Prostate gland (tissue), 2 donors: ENCODE measurements at regions of chr17 and their contacts with region 1.

Region 1: DNA sequence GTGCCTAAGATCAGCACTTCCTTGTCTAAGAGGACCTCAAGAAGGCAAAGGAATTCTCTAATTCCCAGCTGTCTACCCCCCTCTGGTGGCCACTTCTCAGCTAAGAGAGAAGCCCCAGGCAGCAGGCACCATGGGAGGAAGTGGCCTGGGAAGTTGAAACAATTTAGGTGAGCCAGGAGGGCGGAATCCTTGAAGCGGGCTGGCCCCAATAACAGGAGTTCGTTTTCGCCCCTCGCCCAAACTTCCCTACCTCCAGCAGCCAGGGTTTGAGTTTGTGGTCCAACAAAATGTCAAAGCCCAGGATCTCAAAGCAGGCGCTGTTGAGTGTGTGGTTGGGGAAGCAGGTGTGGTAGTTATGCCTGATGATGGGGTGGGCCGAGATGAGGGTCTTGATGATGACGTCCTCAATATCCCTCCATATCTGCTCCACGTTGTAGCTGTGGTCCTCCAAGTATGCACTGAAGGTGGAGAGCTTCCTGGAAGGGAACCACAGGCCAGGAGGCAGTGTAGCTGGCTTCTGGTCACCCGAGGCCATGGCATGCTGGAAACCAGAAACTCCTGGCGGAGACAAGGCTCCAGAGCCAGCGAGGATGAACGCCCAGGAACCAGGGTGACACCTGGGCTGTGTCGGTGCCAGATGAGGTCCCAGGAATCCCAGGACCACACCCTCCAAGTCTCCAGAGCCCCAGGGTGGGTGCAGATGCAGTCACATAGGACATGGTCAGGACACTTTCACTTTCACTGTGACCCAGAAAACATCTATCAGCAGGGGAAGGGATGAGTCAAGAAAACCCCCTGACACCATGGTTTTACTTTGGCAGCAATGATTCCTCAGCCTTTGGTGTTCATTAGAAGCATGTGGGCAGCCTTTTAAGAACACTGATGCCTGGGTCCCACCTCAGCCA is 25.6 kb downstream of the TTLL6 start:
- DNase-seq: peak; percentile 95
- H3K4me3 ChIP-seq: no peak overlapping the region
- H3K27ac ChIP-seq: peak overlapping the region; percentile 46 to 53
- H3K4me1 ChIP-seq: no peaks in the 10 kb centered on the region
- H3K27me3 ChIP-seq: no peaks in the 10 kb centered on the region
- CTCF ChIP-seq: peak; percentile 70 to 94 (median 92)
- POLR2A ChIP-seq: no peak

Region 2: GRCh38 chr17:48671697-48672171 is 119.6 kb before region 1 on chr17:
- intact Hi-C with region 1: loop called (anchors 5 kb)
- DNase-seq: peak; percentile 81
- H3K4me3 ChIP-seq: peak overlapping the region; percentile 9 to 20
- H3K27ac ChIP-seq: no peak overlapping the region
- H3K4me1 ChIP-seq: no peaks in the 10 kb centered on the region
- H3K27me3 ChIP-seq: no peaks in the 10 kb centered on the region
- CTCF ChIP-seq: peak; percentile 64 to 87 (median 83)
- POLR2A ChIP-seq: no peak

Region 3: DNA sequence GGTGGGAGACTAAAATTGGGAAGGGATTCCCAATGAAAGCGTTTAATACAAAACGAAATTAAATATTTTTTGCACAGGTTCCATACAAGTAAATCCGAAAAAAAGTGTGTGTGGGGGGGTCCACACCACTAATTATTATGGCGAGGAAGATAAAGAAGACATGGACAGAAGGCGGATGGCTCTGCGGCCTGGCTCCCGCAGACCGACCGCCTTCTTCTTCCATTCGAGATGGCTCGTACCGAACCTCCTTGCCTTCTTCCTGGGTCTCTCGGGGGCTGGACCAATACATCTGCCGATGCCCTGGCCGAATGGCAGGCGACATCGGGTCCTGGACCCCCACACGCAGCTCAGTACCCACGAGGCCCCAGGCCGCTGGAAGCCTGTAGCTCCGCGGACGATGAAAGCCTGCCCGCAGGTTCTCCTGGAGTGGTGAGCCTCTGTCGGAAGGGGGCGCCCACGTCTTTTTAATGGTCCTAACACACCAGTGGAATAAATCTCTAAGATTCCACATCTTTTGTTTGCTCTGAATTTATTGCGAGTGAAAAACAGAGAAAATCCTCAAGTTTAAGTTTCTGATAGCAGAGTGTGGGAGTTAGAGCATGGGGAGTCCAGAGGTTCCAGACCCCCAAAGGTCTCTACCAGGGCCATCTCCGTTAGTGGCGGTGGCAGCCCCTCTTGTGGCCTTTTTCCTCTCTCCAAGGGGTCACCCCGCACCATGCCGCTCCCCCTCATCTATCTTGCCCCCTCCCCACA is 67.0 kb before region 1 on chr17:
- intact Hi-C with region 1: loop called (anchors 5 kb)
- DNase-seq: peak; percentile 94
- H3K4me3 ChIP-seq: peak overlapping the region; percentile 55 to 63
- H3K27ac ChIP-seq: peak overlapping the region; percentile 97 to 98
- H3K4me1 ChIP-seq: peaks cover 5% of the 10 kb centered on the region
- H3K27me3 ChIP-seq: no peaks in the 10 kb centered on the region
- CTCF ChIP-seq: peak; percentile 66 to 87 (median 80)
- POLR2A ChIP-seq: no peak

Region 4: DNA sequence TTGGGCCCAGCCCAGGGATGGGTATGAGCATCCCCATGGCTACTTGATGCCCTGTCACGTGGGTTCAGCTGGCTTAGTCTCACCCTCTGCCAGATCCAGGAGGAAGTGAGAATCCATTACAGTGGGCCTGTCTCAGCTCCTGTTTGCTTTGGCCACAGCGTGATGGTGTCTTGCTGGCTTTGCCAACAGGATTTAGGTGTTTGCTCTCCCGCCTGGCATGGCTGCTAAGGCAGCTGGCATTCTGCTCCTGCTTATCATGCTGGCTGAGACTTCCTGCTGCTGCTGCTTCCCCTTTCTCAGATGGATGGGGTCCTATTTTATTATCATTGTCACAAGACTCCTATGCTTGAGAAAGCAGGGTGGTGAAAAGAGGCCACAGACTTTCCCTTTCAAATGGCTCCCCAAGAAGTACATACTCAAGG is 34.5 kb before region 1 on chr17:
- intact Hi-C with region 1: no loop called
- DNase-seq: peak; percentile 91
- H3K4me3 ChIP-seq: no peak overlapping the region
- H3K27ac ChIP-seq: peak overlapping the region; percentile 61 to 73
- H3K4me1 ChIP-seq: peaks cover 29% of the 10 kb centered on the region
- H3K27me3 ChIP-seq: no peaks in the 10 kb centered on the region
- CTCF ChIP-seq: no peak
- POLR2A ChIP-seq: no peak

Region 5: DNA sequence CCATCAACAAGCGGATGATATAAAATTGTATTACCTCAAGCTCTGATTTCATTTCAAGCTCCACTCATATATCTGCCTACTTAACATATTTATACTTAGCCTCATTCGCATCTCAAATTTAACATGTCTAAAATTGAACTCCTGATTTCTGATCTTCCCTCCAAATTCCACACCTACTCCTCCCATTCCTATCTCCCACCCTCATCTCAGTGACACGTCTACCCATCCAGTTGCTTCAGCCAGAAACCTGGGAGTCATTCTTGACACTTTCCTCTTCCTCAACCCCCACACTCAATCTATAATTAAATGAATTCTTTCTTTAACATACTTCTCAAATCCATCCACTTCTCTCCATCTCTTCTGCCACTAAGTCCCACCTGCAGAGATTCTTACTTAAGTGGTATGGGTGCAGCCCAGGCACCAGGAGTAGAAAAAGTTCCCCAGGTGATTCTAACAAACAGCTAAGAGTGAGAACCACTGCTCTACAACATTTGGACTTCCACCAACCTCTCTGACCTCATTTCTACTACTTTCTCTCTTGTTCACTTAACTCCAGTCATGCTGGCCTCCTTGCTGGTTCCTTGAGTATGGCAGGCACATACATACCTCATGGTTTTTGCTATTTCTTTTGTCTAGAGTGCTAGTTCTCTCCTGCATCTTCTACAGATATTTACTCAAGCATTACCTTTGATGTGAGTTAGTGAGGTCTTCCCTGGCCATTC is 868.4 kb after region 1 on chr17:
- intact Hi-C with region 1: no loop called
- DNase-seq: no peak
- H3K4me3 ChIP-seq: no peak overlapping the region
- H3K27ac ChIP-seq: no peak overlapping the region
- H3K4me1 ChIP-seq: no peaks in the 10 kb centered on the region
- H3K27me3 ChIP-seq: no peaks in the 10 kb centered on the region
- CTCF ChIP-seq: no peak
- POLR2A ChIP-seq: no peak